HEK293 (cell line): ENCODE measurements at regions of chr13 and their contacts with region 1.

Region 1: DNA sequence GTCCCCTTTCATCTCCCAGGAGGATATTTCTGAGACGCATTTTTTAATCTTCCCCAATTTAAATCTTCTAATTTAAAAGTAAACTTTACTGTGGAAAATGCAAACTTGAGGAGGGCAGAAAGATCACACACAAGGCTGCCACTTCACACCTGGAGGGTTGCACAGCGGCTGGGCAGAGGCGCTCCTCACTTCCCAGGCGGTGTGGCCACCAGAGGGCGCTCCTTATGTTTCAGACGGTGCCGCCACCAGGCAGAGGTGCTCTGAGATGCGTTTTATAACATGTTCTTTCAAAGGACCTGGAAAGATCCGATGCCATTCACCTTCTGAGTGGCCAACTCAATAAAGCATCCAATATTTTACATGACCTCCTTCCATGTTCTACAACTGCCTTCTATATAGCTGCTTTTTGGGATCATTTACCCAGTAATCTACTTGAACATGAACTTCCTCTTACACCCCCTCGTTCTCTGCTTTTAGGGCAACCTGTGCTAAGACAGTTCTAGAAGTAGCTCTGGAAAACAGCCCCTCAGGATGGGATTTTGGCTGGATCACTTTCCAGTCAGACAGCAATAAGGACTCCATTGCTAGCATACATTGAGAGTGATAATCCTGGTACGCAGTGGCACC is 14.8 kb upstream of the MTUS2 start:
- H3K4me3 ChIP-seq: no peak overlapping the region
- H3K27ac ChIP-seq: no peak overlapping the region
- H3K4me1 ChIP-seq: no peaks in the 10 kb centered on the region
- CTCF ChIP-seq: no peak

Region 2: GRCh38 chr13:28792992-28793391 is 12.3 kb before region 1 on chr13:
- CTCF ChIA-PET with region 1: no interaction called
- POLR2A ChIA-PET with region 1: no interaction called
- H3K4me3 ChIP-seq: no peak overlapping the region
- H3K27ac ChIP-seq: no peak overlapping the region
- H3K4me1 ChIP-seq: no peaks in the 10 kb centered on the region
- CTCF ChIP-seq: no peak

Region 3: GRCh38 chr13:28819735-28820098 is 14.4 kb after region 1 on chr13:
- CTCF ChIA-PET with region 1: interaction called, 14 read pairs
- POLR2A ChIA-PET with region 1: no interaction called
- H3K4me3 ChIP-seq: peak overlapping the region; percentile 46
- H3K27ac ChIP-seq: peak overlapping the region; percentile 16; the same call in 1 of the 2 replicates
- H3K4me1 ChIP-seq: no peaks in the 10 kb centered on the region
- CTCF ChIP-seq: no peak

Region 4: GRCh38 chr13:29369060-29369743 is 563.9 kb after region 1 on chr13:
- CTCF ChIA-PET with region 1: interaction called, 11 read pairs
- POLR2A ChIA-PET with region 1: no interaction called
- H3K4me3 ChIP-seq: no peak overlapping the region
- H3K27ac ChIP-seq: no peak overlapping the region
- H3K4me1 ChIP-seq: no peaks in the 10 kb centered on the region
- CTCF ChIP-seq: no peak